Panc1 (cell line): ENCODE measurements at regions of chr14 and their contacts with region 1.

Region 1: GRCh38 chr14:35814371-35815005 is 5.4 kb upstream of the RALGAPA1 start:
- DNase-seq: no peak
- ATAC-seq: peak; percentile 86
- H3K4me3 ChIP-seq: no peak overlapping the region
- H3K27ac ChIP-seq: no peak overlapping the region
- H3K4me1 ChIP-seq: no peaks in the 10 kb centered on the region
- H3K27me3 ChIP-seq: no peaks in the 10 kb centered on the region; the same call in 1 of the 2 replicates
- CTCF ChIP-seq: peak; percentile 84

Region 2: GRCh38 chr14:35446450-35446849 is 368.0 kb before region 1 on chr14:
- CTCF ChIA-PET with region 1: no interaction called
- POLR2A ChIA-PET with region 1: no interaction called
- in situ Hi-C with region 1: no loop called
- intact Hi-C with region 1: loop called (anchors 10 kb)
- DNase-seq: no peak
- ATAC-seq: no peak
- H3K4me3 ChIP-seq: no peak overlapping the region
- H3K27ac ChIP-seq: no peak overlapping the region
- H3K4me1 ChIP-seq: no peaks in the 10 kb centered on the region
- H3K27me3 ChIP-seq: no peaks in the 10 kb centered on the region
- CTCF ChIP-seq: no peak

Region 3: GRCh38 chr14:35783699-35784098 is 30.8 kb before region 1 on chr14:
- CTCF ChIA-PET with region 1: interaction called, 12 read pairs
- POLR2A ChIA-PET with region 1: no interaction called
- in situ Hi-C with region 1: no loop called
- intact Hi-C with region 1: no loop called
- DNase-seq: no peak
- ATAC-seq: no peak
- H3K4me3 ChIP-seq: no peak overlapping the region
- H3K27ac ChIP-seq: no peak overlapping the region
- H3K4me1 ChIP-seq: no peaks in the 10 kb centered on the region
- H3K27me3 ChIP-seq: no peaks in the 10 kb centered on the region
- CTCF ChIP-seq: no peak